GM18951 (cell line): ENCODE measurements at regions of chr11 and their contacts with region 1.

Region 1: DNA sequence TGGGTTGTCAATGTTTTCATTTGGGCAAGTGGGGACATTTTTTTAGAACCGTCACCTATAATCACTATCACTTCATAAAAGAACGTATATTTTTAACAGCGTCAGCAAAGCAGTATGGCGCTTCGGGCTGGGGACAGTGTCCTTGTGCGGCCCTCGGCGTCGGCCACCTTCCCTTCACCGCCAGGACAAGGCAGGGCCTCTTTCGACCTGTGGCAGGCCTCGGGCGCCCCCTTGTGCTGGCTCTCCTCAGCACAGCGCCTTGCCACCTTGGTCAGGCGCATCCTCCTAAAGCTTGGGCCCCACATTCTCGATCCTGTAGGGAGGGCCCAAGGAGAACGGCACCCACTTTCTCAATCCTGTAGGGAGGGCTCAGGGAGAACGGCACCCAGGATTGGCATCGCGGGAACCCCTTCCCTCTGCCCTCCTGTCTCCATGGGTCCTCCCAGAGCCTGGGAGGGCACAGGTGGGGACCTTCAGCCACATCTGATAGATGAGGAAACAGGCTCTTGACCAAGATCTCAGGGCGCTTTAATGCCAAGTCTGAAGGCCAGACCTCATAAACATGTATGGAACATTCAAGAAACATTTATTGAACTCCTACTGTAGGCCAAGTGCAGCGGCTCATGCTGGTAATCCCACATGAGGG is 11.5 kb upstream of the FADD start:
- POLR2A ChIP-seq: no peak

Region 2: DNA sequence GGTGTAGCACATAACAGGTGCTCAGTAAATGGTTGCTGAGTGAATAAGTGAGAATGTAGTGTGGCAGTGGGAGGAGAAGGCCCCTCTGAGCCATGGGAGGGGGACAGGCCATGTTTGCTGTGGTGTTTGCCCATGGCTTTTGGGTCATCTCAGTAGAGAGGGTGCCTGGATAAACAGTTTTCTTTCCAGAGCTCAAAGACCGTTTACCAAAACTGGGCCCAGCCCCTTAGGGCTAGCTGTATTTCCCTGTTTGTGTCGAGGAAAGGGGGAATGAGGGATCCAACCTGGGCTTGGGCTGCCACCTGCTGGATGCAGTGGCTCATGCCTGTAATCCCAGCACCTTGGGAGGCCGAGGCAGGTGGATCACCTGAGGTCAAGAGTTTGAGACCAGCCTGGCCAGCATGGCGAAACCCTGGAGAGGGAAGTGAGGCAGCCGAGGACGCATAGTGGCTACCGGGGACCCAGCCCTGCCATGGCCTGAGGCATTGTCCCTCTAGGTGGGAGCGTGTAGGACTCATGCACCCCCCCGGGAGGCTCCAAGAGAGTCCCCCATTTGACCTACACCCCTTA is 507.8 kb before region 1 on chr11:
- in situ Hi-C with region 1: loop called (anchors 25 kb)
- POLR2A ChIP-seq: no peak

Region 3: GRCh38 chr11:69925366-69926196 is 266.0 kb before region 1 on chr11:
- in situ Hi-C with region 1: loop called (anchors 10 kb)
- POLR2A ChIP-seq: no peak

Region 4: DNA sequence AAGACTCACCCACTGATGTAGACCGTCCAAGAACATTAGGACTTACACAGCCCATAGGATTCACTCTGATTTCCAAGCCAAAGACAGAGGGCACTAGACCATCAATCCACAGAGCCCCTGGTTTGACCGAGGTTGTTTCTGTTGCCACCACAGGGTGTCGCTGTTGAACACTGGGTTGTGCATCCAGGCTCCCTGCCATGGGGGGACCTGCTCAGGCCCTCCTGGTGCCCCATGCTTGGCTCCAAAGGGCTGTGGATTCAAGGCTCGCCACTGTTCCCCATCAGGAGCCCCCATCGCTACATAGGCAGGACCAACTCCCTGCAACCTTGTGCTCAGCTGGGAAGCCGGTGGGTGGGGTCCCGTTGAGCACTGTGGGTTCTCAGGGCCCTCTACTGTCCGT is 241.5 kb before region 1 on chr11:
- in situ Hi-C with region 1: no loop called
- POLR2A ChIP-seq: no peak

Region 5: DNA sequence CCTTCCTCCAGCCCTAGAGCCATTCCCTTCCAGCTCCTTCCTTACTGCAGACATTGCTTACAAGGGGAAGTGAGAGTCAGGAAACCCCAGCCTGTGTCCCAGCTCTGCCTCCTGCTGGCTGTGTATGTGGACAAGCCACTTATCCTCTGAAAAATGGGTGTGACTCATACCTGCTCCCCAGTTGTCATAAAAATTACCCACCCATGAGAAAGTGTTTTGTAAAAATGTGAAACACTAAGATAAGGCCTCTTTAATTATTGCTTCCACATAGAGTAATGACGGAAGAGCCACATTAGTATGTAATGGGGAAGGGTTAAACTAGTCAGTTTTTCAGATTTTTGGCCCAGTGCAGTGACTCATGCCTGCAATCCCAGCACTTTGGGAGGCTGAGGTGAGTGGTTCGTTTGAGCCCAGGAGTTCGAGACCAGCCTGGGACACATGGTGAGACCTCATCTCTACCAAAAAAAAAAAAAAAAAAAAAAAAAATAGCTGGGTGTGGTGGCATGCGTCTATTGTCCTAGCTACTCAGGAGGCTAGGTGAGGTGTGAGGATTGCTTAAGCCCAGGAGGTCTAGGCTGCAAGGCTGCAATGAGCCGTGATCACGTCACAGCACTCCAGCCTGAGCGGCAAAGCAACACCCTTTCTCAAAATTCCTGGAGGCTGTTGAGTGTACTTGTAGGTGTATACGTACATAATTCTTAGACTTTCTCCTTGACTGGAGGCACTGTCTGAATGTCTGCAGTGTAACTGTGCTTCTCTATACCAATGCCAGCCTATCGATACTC is 291.7 kb after region 1 on chr11:
- in situ Hi-C with region 1: no loop called
- POLR2A ChIP-seq: no peak